ENCODE measurements at regions of chr4 and their contacts with region 1.

Region 1: DNA sequence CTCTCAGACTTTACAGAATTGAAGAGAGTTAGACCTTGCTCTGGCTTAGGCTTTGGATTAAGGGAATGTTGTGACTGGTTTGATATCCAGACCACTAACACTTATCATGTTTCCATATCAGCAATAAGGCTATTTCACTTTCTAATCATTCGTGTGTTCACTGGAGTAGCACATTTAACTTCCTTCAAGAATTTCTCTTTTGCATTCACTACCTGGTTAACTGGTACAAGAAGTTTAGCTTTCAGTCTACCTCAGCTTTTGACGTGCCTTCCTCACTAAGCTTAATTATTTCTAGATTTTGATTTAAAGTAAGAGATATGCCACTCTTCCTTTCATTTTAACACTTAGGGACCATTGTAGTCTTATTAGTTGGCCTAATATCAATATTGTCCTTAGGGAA is 62.6 kb downstream of the CASP6 start:
- DNase-seq: no peak
- ATAC-seq: no peak
- H3K4me3 ChIP-seq: no peak overlapping the region
- H3K27ac ChIP-seq: no peak overlapping the region
- H3K4me1 ChIP-seq: no peaks in the 10 kb centered on the region; a peak in 1 of 5 replicates
- H3K27me3 ChIP-seq: peaks cover 0 to 2% of the 10 kb centered on the region in 2 experiments; a peak in 1 of 5 replicates
- CTCF ChIP-seq: no peak
- EP300 ChIP-seq: no peak
- POLR2A ChIP-seq: no peak
- RAD21 ChIP-seq: no peak

Region 2: GRCh38 chr4:108906006-108906405 is 734.6 kb before region 1 on chr4:
- CTCF ChIA-PET with region 1: no interaction called
- POLR2A ChIA-PET with region 1: no interaction called
- in situ Hi-C with region 1: no loop called
- intact Hi-C with region 1: no loop called
- DNase-seq: no peak
- ATAC-seq: no peak
- H3K4me3 ChIP-seq: no peak overlapping the region
- H3K27ac ChIP-seq: no peak overlapping the region
- H3K4me1 ChIP-seq: peaks cover 0 to 4% of the 10 kb centered on the region in 2 experiments; a peak in 3 of 5 replicates
- H3K27me3 ChIP-seq: no peaks in the 10 kb centered on the region
- CTCF ChIP-seq: no peak
- EP300 ChIP-seq: no peak
- POLR2A ChIP-seq: no peak
- RAD21 ChIP-seq: no peak

Region 3: DNA sequence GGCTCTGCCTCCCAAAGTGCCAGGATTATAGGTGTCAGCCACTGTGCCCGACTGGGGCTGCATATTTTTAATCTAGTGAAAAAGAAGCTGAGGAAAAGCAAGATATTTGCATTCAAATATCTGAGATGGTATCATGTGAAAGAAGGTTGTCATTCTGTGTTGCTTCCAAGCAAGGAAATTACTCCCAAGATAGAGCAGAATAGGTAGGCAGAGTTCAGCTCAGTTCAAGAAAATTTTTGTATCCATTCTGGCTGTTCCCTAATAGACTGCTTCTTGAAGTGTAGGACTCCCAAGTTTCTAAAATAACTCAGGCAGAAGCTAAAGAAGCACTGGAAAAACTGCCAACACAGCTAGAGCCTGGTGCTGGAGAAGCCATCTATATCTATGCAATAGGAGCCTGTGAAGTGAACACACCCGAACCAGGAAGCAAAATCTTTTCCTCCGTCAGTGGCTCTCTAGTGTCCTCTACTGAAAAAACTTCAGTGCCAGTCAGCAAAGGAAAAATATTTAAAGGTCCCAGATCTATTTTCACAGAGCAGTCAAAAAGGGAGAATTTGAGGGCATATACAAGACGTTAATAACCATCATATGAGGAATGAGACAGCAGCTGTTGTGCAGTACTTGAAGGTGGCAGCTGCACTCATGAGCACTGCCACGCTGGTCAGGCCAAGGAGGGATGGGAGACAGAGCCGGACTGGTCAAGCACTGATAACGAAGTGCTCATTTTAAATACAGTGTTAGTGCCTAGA is 66.4 kb before region 1 on chr4:
- CTCF ChIA-PET with region 1: no interaction called
- POLR2A ChIA-PET with region 1: no interaction called
- in situ Hi-C with region 1: no loop called
- intact Hi-C with region 1: loop called (anchors 5 kb)
- DNase-seq: peak in 2 of 4 experiments; percentile 35 to 51
- ATAC-seq: peak; percentile 91
- H3K4me3 ChIP-seq: no peak overlapping the region
- H3K27ac ChIP-seq: no peak overlapping the region
- H3K4me1 ChIP-seq: peaks cover 0 to 16% of the 10 kb centered on the region in 2 experiments; a peak in 4 of 5 replicates
- H3K27me3 ChIP-seq: no peaks in the 10 kb centered on the region
- CTCF ChIP-seq: peak; percentile 44 to 71 (median 49); a peak in 5 of 6 replicates
- EP300 ChIP-seq: no peak
- POLR2A ChIP-seq: no peak
- RAD21 ChIP-seq: peak; percentile 48 to 71; a peak in 3 of 4 replicates

Measured in K562 (cell line).